Heart right ventricle (tissue), 16 donors: ENCODE measurements at regions of chr18 and their contacts with region 1.

Region 1: DNA sequence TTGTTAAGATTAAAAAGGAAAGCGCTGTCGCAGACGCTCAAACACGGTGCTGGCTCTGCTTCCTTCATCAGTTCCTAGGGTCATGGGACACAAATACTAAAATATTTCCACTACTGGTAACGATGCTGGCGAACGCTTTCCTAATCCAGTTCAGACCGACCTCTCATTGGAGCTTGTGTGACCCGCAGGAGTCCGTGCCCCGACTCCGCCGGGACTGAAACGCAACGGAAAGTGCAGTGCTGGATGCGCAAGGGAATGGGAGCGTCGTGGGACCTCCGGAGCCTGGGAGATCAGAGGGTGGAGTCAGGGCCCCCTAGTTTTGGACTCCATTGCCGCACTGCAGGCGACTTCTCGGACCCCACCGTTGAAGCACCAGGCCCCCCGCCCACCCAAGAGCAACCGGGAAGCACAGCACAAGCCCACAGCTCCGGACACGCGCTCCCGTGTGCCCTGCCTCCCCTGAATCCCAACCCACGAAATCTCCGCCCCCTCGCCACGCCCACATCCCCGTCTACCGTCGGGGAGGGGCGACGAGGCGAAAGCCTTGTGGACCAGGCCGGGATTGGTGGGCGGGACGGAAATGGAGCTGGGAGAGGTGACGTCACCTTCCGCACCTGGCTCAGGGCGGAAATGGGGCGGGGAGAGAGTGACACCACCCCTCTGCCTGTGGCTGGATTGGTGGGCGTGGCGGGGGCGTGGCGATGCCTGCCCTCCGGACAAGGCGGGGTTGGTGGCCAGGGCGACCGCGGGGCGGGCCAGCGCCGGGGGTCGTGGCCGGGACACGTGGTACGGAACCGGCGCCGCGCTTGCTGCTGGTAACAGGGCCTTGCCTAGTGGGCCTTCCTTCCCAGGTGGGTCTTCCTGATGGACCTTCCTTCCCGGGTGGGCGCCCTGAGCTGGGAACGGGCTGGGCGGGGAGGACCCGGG is at the start of gene CNDP2:
- DNase-seq: peak; percentile 100
- ATAC-seq: peak; percentile 96 to 99 (median 97)
- H3K4me3 ChIP-seq: peak within 1 kb of the TSS; percentile 61 to 99 (median 87)
- H3K27ac ChIP-seq: peak within 1 kb of the TSS; percentile 78 to 98 (median 94)
- H3K4me1 ChIP-seq: peaks cover 0 to 56% (median 33%) of the 10 kb centered on the region in 9 donors
- H3K27me3 ChIP-seq: no peaks in the 10 kb centered on the region
- CTCF ChIP-seq: no peak
- total RNA-seq, gene CNDP2: 50.2 to 117 (median 75.3) TPM

Region 2: DNA sequence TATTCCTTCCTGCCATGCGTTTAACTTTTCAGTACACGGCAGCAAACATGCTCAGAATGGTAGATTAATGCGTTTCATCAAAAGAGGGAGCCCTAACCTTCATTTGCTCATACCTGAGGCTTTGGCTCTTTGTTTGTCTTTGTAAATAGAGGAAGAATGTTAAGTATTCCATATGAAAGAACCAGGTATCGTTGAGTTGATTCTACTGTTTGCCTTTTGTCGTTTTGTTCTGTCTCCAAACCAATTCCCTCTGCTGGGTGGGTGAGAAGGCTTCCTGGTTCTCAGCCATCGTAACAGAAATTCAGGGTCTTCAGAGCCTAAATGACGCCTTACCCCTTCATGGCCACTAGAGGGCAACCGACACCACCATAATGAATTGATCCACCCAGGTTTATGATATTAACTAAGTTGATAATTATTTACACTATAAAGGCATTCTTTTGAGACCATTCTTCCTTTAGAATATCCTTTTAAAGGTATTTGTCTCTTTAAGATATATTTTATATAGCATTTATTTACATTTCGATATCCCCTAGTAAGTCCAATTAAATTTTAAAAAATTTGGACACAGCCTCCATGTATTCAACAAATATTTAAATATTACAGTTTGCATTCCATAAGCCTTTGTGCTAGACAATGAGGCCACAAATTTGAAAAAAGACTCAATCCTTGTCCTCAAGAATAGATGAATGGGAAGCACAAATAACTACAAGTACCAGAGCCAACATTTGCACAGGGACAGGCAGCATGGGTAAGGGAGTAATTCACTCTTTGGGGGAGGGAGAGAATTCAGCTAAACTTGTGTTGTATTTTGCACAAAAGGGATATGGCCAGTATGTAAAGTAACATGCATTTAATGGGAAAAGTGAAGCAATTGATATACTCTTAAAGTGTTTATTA is 299.4 kb before region 1 on chr18:
- intact Hi-C with region 1: loop called in 4 of 10 experiments (anchors 5 to 10 kb)
- DNase-seq: peak in 1 of 2 donors; percentile 25
- ATAC-seq: peak in 6 of 8 donors; percentile 58 to 79 (median 74)
- H3K4me3 ChIP-seq: peak overlapping the region in 5 of 10 donors; percentile 16 to 28 (median 24)
- H3K27ac ChIP-seq: no peak overlapping the region
- H3K4me1 ChIP-seq: peaks cover 0 to 4% (median 2%) of the 10 kb centered on the region in 9 donors
- H3K27me3 ChIP-seq: peaks cover 0 to 29% (median 8%) of the 10 kb centered on the region in 7 donors
- CTCF ChIP-seq: peak; percentile 80 to 95 (median 89)

Region 3: DNA sequence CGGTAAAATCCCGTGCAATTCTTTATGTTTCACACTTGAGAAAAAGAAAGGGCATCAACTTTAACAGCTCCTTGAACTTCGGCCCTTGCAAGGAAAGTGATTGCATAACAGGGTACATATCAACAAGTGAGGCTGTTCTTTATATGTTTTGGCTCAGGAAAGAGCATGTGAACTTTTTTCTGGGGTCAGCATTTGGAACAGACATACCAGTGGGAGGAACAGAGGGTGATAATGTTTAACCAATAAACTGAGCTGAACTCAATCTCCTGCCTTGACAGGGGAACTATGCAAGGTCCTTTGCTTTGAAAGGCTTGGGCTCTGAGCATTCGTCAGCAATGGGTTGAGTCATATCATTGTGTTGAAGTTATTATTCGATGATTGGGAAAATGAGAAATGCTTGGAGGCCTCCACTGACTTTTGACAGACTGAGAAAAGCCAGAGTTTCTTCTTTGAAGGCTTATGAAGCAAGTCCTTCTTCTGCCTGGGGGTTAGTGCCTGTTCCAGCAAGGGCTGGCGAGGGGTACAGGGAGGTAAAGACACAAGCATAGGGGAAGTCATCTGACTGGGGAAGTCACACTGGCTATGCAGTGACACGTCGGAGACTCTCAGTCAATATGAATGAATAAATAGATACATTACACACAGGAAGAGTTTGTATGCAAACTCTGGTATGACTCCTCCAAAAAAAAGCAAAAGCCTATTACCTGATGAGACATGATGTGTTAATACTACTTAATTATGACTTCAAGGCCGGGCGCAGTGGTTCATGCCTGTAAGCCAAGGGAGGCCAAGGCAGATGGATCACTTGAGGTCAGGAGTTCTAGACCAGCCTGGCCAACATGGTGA is 261.3 kb before region 1 on chr18:
- intact Hi-C with region 1: no loop called
- DNase-seq: no peak
- ATAC-seq: peak; percentile 58 to 87 (median 75)
- H3K4me3 ChIP-seq: no peak overlapping the region
- H3K27ac ChIP-seq: peak overlapping the region in 3 of 10 donors; percentile 1 to 67 (median 3)
- H3K4me1 ChIP-seq: peaks cover 0 to 16% (median 4%) of the 10 kb centered on the region in 9 donors
- H3K27me3 ChIP-seq: peaks cover 0 to 8% (median 0%) of the 10 kb centered on the region in 7 donors
- CTCF ChIP-seq: no peak

Region 4: DNA sequence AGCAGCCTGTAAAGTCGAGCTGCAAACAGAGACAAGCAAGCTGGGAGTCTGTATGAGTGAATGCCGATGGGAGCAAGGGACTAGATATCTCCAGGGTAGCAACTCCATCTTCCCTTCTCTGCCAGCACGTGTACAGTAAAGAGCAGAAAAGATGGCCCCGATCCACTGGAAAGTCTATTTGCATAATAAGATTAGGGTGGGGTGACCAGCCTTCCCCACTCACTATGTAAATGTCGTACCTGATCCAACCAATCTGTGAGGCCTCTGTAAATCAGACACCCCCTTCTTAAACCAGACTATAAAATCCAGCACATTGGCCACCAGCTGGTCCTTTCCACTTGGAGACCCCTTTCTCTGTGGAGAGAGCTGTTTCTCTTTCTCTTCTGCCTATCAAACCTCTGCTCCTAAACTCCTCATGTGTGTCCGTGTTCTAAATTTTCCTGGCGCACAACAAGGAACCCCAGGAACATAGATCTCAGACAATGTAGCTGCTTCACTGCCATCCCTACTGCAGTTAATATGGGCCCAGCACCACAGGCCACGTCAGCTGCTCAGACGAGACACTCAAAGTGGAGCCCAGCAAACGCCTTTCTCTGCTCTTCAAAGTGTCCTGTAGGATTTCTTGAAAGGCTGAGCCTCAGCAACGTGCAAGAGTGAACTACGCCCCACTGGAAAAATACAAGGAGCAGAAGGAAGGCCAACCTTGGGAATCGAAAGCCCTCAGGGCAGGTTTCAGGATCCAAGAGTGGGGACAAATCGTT is 64.9 kb before region 1 on chr18:
- intact Hi-C with region 1: no loop called
- DNase-seq: no peak
- ATAC-seq: no peak
- H3K4me3 ChIP-seq: no peak overlapping the region
- H3K27ac ChIP-seq: no peak overlapping the region
- H3K4me1 ChIP-seq: peaks cover 0 to 7% (median 3%) of the 10 kb centered on the region in 9 donors
- H3K27me3 ChIP-seq: no peaks in the 10 kb centered on the region
- CTCF ChIP-seq: no peak

Region 5: GRCh38 chr18:74457043-74457724 is 38.7 kb before region 1 on chr18 and contains the start of gene DIPK1C:
- intact Hi-C with region 1: loop called in 1 of 10 experiments (anchors 2 kb)
- DNase-seq: peak in 1 of 2 donors; percentile 42
- ATAC-seq: peak; percentile 21 to 61 (median 36)
- H3K4me3 ChIP-seq: peak within 1 kb of the TSS; percentile 55 to 77 (median 69)
- H3K27ac ChIP-seq: peak within 1 kb of the TSS; percentile 20 to 89 (median 78)
- H3K4me1 ChIP-seq: peaks cover 3 to 77% (median 40%) of the 10 kb centered on the region in 9 donors
- H3K27me3 ChIP-seq: peaks cover 0 to 72% (median 25%) of the 10 kb centered on the region in 7 donors
- CTCF ChIP-seq: no peak
- total RNA-seq, gene DIPK1C: 0.90 to 12.9 (median 6.6) TPM

Region 6: DNA sequence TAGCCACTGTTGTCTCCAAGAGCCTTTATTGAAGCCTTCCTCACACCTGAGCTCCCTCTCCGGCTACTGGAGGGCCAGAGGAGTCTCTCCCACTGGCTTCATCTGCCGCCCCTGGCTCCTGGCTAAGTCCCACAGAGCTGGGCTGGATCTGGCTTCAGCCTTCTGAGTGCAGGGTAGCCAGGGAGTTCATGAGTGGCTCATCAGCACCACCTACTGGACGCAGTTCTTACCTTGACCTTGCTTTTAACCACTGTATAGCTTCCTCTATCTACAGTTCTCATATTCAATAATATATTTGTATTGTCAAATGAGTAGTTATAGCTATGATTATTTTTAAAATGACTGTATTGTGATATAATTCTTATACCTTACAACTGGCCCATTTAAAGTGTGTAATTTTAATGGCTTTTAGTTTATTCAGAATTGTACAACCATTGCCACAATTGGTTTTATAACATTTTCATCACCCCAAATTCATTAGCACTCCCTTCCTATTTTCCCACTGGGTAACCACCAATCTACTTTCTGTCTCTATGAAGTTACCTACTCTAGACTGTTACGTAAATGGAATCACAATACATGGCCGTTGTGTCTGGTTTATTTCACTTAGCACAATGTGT is 56.2 kb after region 1 on chr18:
- intact Hi-C with region 1: loop called in 7 of 10 experiments (anchors 1 to 10 kb)
- DNase-seq: peak; percentile 70 to 89
- ATAC-seq: peak; percentile 86 to 95 (median 94)
- H3K4me3 ChIP-seq: no peak overlapping the region
- H3K27ac ChIP-seq: no peak overlapping the region
- H3K4me1 ChIP-seq: peaks cover 0 to 22% (median 15%) of the 10 kb centered on the region in 9 donors
- H3K27me3 ChIP-seq: no peaks in the 10 kb centered on the region
- CTCF ChIP-seq: peak; percentile 84 to 92 (median 88)

Region 7: DNA sequence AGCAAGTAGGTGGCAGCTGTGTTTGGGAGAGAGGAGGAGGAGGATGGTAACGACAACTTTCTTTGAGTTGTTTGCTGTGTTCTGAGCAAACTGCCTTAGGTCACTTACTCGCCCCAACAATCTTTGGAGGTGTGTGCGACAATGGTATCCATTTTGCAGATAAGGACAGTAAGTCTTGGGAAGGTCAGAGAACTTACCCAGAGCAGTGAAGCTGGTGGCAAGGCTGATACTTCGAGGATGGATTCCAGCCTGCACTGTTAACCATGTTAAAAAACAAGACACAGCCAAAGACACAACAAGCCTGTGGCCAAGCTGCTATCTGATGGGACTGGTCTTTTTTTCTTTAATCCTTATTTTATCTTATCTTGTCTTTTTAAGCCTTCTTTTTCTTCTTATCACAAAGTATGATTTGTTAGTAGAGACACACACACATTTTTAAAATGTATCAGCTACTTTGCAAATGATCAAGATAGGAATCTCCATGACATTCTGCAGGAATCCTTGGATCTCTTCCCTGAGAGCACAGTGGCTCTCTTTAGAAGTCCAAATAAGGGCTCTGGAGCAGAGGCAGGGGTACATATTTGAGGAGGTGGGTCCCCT is 66.4 kb after region 1 on chr18:
- intact Hi-C with region 1: no loop called
- DNase-seq: no peak
- ATAC-seq: no peak
- H3K4me3 ChIP-seq: no peak overlapping the region
- H3K27ac ChIP-seq: no peak overlapping the region
- H3K4me1 ChIP-seq: peaks cover 0 to 2% (median 0%) of the 10 kb centered on the region in 9 donors
- H3K27me3 ChIP-seq: no peaks in the 10 kb centered on the region
- CTCF ChIP-seq: no peak

Region 8: DNA sequence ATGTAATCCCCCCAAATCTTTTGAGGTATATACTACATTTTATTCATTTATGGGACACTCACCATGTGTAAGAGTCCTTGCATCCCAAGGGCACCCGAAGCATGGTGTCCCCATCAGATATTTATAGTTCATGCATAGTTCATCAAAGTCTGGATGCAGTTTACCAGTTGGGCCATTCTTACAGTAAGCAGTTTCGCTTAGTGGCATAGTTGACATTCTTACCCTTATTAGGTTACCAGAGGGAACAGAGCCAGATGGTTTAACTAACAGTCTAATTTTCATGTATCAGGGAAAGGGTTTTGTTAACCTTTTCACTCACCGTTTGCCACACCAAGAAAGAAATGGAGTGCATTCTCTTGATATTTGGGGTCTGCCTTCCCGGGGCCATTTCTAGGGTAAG is 108.9 kb after region 1 on chr18:
- intact Hi-C with region 1: loop called in 3 of 10 experiments (anchors 5 kb)
- DNase-seq: no peak
- ATAC-seq: peak in 7 of 8 donors; percentile 29 to 76 (median 71)
- H3K4me3 ChIP-seq: no peak overlapping the region
- H3K27ac ChIP-seq: peak overlapping the region in 2 of 10 donors; percentile 22 to 45
- H3K4me1 ChIP-seq: peaks cover 0 to 20% (median 5%) of the 10 kb centered on the region in 9 donors
- H3K27me3 ChIP-seq: no peaks in the 10 kb centered on the region
- CTCF ChIP-seq: no peak